HepG2 (cell line): ENCODE measurements at regions of chr17 and their contacts with region 1.

Region 1: GRCh38 chr17:18225121-18225566 is 291 bp upstream of the LLGL1 start:
- DNase-seq: peak; percentile 87
- ATAC-seq: peak; percentile 89
- H3K4me3 ChIP-seq: peak overlapping the region; percentile 70 to 93 (median 86)
- H3K27ac ChIP-seq: peak overlapping the region; percentile 60
- H3K4me1 ChIP-seq: peaks cover 54% of the 10 kb centered on the region
- H3K27me3 ChIP-seq: no peaks in the 10 kb centered on the region; a peak in 1 of 5 replicates
- CTCF ChIP-seq: no peak
- EP300 ChIP-seq: no peak
- POLR2A ChIP-seq: peak in 1 of 2 experiments; percentile 14; a peak in 1 of 4 replicates
- RAD21 ChIP-seq: no peak

Region 2: GRCh38 chr17:18183334-18184142 is 41.6 kb before region 1 on chr17 and contains the start of gene ALKBH5:
- CTCF ChIA-PET with region 1: no interaction called
- POLR2A ChIA-PET with region 1: interaction called, 29 read pairs
- in situ Hi-C with region 1: no loop called
- intact Hi-C with region 1: no loop called
- DNase-seq: peak; percentile 99
- ATAC-seq: peak; percentile 91
- H3K4me3 ChIP-seq: peak within 1 kb of the TSS; percentile 80 to 96 (median 81)
- H3K27ac ChIP-seq: peak within 1 kb of the TSS; percentile 96
- H3K4me1 ChIP-seq: peaks cover 58% of the 10 kb centered on the region
- H3K27me3 ChIP-seq: no peaks in the 10 kb centered on the region
- CTCF ChIP-seq: peak; percentile 70
- EP300 ChIP-seq: peak in 1 of 2 experiments; percentile 32; a peak in 1 of 4 replicates
- POLR2A ChIP-seq: peak; percentile 12 to 78; a peak in 3 of 4 replicates
- RAD21 ChIP-seq: peak; percentile 46
- total RNA-seq, gene ALKBH5: 68.9 and 77.9 TPM in 2 replicates

Region 3: GRCh38 chr17:18257982-18258355 is 32.8 kb after region 1 on chr17:
- CTCF ChIA-PET with region 1: no interaction called
- POLR2A ChIA-PET with region 1: interaction called, 7 read pairs
- in situ Hi-C with region 1: loop called (anchors 5 kb)
- intact Hi-C with region 1: no loop called
- DNase-seq: peak; percentile 53
- ATAC-seq: peak; percentile 70
- H3K4me3 ChIP-seq: peak overlapping the region; percentile 67 to 95 (median 87)
- H3K27ac ChIP-seq: peak overlapping the region; percentile 82
- H3K4me1 ChIP-seq: peaks cover 34% of the 10 kb centered on the region
- H3K27me3 ChIP-seq: no peaks in the 10 kb centered on the region; a peak in 1 of 5 replicates
- CTCF ChIP-seq: peak; percentile 36
- EP300 ChIP-seq: no peak
- POLR2A ChIP-seq: peak in 1 of 2 experiments; percentile 27; a peak in 1 of 4 replicates
- RAD21 ChIP-seq: no peak